ENCODE measurements at regions of chr7 and their contacts with region 1.

Region 1: GRCh38 chr7:100101016-100101862 is at the starts of genes AP4M1 and MCM7:
- DNase-seq: peak; percentile 84 to 98 (median 93)
- ATAC-seq: peak; percentile 90
- H3K4me3 ChIP-seq: peak within 1 kb of the TSS; percentile 98
- H3K4me3 Mint-ChIP-seq: peak within 1 kb of the TSS; percentile 85 to 95 (median 93)
- H3K27ac ChIP-seq: peak within 1 kb of the TSS; percentile 91
- H3K27ac Mint-ChIP-seq: peak within 1 kb of the TSS; percentile 90 to 98 (median 96)
- H3K4me1 ChIP-seq: peaks cover 17 to 25% of the 10 kb centered on the region in 2 donors
- H3K4me1 Mint-ChIP-seq: peaks cover 27 to 47% (median 41%) of the 10 kb centered on the region in 7 donors
- H3K27me3 ChIP-seq: no peaks in the 10 kb centered on the region
- H3K27me3 Mint-ChIP-seq: no peaks in the 10 kb centered on the region
- total RNA-seq, gene AP4M1: 7.5 to 13.8 (median 11.0) TPM
- total RNA-seq, gene MCM7: 80.3 to 263 (median 168) TPM

Region 2: GRCh38 chr7:99504603-99505323 is 596.5 kb before region 1 on chr7 and contains the start of gene ZKSCAN5:
- CTCF ChIA-PET with region 1: no interaction called
- POLR2A ChIA-PET with region 1: interaction called, 3 read pairs
- intact Hi-C with region 1: loop called in 1 of 2 experiments (anchors 5 kb)
- DNase-seq: peak; percentile 93 to 98 (median 97)
- ATAC-seq: peak; percentile 93
- H3K4me3 ChIP-seq: peak within 1 kb of the TSS; percentile 98
- H3K4me3 Mint-ChIP-seq: peak within 1 kb of the TSS; percentile 84 to 100 (median 96)
- H3K27ac ChIP-seq: peak within 1 kb of the TSS; percentile 88
- H3K27ac Mint-ChIP-seq: peak within 1 kb of the TSS; percentile 68 to 99 (median 97)
- H3K4me1 ChIP-seq: peaks cover 13 to 27% of the 10 kb centered on the region in 2 donors
- H3K4me1 Mint-ChIP-seq: peaks cover 20 to 41% (median 30%) of the 10 kb centered on the region in 7 donors
- H3K27me3 ChIP-seq: no peaks in the 10 kb centered on the region
- H3K27me3 Mint-ChIP-seq: no peaks in the 10 kb centered on the region
- total RNA-seq, gene ZKSCAN5: 4.7 to 11.0 (median 8.3) TPM

Region 3: GRCh38 chr7:100049441-100050311 is 51.6 kb before region 1 on chr7 and contains the start of gene ZSCAN21:
- CTCF ChIA-PET with region 1: interaction called, 4 read pairs
- POLR2A ChIA-PET with region 1: interaction called, 7 read pairs
- intact Hi-C with region 1: loop called (anchors 1 kb)
- DNase-seq: peak; percentile 70 to 89 (median 78)
- ATAC-seq: peak; percentile 94
- H3K4me3 ChIP-seq: peak within 1 kb of the TSS; percentile 92
- H3K4me3 Mint-ChIP-seq: peak within 1 kb of the TSS; percentile 86 to 95 (median 92)
- H3K27ac ChIP-seq: peak within 1 kb of the TSS; percentile 95
- H3K27ac Mint-ChIP-seq: peak within 1 kb of the TSS; percentile 81 to 98 (median 97)
- H3K4me1 ChIP-seq: peaks cover 0 to 6% of the 10 kb centered on the region in 2 donors
- H3K4me1 Mint-ChIP-seq: peaks cover 4 to 29% (median 25%) of the 10 kb centered on the region in 7 donors
- H3K27me3 ChIP-seq: no peaks in the 10 kb centered on the region
- H3K27me3 Mint-ChIP-seq: peaks cover 0 to 3% (median 0%) of the 10 kb centered on the region in 5 donors
- total RNA-seq, gene ZSCAN21: 3.9 to 10.1 (median 6.2) TPM

Region 4: DNA sequence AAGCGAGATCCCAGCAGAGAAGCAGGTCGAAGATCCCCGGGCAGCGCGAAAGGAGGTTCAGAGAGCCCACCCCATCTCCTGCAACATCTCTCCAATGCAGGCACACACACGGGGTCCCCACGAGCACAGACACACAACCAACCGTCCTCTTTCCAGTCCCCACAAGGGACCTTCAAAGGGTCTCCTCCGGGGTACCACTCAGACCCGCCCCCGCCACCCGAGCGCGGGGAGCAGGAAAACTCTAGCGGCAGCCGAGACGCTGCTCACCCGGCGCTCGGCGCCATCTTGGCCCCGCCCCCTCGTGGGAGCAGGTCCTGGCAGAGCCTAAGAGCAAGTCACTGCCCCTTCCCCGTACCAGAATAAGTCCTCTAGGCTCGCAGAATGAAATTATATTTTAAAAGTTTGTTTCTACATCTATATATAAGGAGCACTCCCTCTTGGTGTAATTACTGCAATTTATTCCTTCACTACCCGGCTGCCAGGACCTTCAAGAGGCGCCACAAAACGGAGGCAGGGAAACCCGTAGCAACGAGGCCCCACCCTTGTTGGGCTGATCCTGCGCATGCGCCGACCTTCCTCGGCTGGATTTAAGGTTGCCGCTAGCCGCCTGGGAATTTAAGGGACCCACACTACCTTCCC is 17.9 kb after region 1 on chr7 and contains the starts of genes CNPY4 and TAF6:
- CTCF ChIA-PET with region 1: no interaction called
- POLR2A ChIA-PET with region 1: interaction called, 107 read pairs
- intact Hi-C with region 1: loop called (anchors 1 kb)
- DNase-seq: peak; percentile 88 to 97 (median 95)
- ATAC-seq: peak; percentile 88
- H3K4me3 ChIP-seq: peak within 1 kb of the TSS; percentile 100
- H3K4me3 Mint-ChIP-seq: peak within 1 kb of the TSS; percentile 90 to 100 (median 98)
- H3K27ac ChIP-seq: peak within 1 kb of the TSS; percentile 88
- H3K27ac Mint-ChIP-seq: peak within 1 kb of the TSS; percentile 97 to 99 (median 98)
- H3K4me1 ChIP-seq: peaks cover 12 to 19% of the 10 kb centered on the region in 2 donors
- H3K4me1 Mint-ChIP-seq: peaks cover 18 to 34% (median 28%) of the 10 kb centered on the region in 7 donors
- H3K27me3 ChIP-seq: no peaks in the 10 kb centered on the region
- H3K27me3 Mint-ChIP-seq: no peaks in the 10 kb centered on the region
- total RNA-seq, gene CNPY4: 22.1 to 68.2 (median 40.3) TPM
- total RNA-seq, gene TAF6: 39.5 to 68.1 (median 55.0) TPM

Region 5: DNA sequence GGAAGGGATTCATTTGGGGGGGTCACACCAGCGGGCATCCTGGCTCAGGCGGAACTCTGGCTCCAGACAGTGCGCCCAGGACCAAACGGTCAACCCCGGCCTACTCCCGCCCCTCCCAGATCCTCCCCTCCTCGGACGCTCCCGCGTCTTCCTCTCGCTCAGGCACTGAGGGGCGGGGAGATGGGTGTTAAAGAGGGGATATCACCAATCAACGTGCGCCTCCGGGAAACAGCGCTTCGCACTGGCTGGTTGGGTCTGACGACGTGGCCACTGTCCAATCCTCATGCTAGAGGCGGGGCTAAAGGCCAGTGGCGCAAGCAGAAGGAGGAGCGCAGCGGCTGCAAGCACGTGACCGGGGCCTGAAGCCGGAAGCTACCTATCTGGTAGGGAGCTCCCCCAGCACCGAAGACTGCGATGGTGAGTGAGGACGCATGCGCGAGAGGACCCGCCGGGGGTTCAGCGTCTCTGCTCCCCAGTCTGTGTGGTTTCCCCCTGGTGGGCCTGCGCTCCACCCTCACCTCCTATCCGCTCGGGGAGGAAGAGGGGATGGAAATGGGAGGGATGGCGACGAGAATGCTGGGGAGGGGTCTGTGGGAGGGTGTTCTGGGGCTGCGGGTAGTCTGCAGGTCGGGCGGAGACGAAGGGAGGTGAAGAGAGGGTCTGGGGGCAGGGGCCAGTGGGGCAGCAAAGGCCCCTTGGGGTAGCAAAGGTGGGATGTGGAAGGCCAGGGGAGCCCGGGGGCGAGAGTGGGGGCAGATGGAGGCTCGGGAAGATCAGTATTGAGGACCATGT is 47.5 kb after region 1 on chr7 and contains the start of gene LAMTOR4:
- CTCF ChIA-PET with region 1: interaction called, 4 read pairs
- POLR2A ChIA-PET with region 1: interaction called, 4 read pairs
- intact Hi-C with region 1: loop called in 1 of 2 experiments (anchors 1 kb)
- DNase-seq: peak; percentile 84 to 99 (median 97)
- ATAC-seq: peak; percentile 98
- H3K4me3 ChIP-seq: peak within 1 kb of the TSS; percentile 97
- H3K4me3 Mint-ChIP-seq: peak within 1 kb of the TSS; percentile 87 to 100 (median 96)
- H3K27ac ChIP-seq: peak within 1 kb of the TSS; percentile 98
- H3K27ac Mint-ChIP-seq: peak within 1 kb of the TSS; percentile 95 to 99 (median 98)
- H3K4me1 ChIP-seq: peaks cover 15 to 19% of the 10 kb centered on the region in 2 donors
- H3K4me1 Mint-ChIP-seq: peaks cover 27 to 45% (median 38%) of the 10 kb centered on the region in 7 donors
- H3K27me3 ChIP-seq: no peaks in the 10 kb centered on the region
- H3K27me3 Mint-ChIP-seq: no peaks in the 10 kb centered on the region
- total RNA-seq, gene LAMTOR4: 132 to 200 (median 173) TPM

Region 6: DNA sequence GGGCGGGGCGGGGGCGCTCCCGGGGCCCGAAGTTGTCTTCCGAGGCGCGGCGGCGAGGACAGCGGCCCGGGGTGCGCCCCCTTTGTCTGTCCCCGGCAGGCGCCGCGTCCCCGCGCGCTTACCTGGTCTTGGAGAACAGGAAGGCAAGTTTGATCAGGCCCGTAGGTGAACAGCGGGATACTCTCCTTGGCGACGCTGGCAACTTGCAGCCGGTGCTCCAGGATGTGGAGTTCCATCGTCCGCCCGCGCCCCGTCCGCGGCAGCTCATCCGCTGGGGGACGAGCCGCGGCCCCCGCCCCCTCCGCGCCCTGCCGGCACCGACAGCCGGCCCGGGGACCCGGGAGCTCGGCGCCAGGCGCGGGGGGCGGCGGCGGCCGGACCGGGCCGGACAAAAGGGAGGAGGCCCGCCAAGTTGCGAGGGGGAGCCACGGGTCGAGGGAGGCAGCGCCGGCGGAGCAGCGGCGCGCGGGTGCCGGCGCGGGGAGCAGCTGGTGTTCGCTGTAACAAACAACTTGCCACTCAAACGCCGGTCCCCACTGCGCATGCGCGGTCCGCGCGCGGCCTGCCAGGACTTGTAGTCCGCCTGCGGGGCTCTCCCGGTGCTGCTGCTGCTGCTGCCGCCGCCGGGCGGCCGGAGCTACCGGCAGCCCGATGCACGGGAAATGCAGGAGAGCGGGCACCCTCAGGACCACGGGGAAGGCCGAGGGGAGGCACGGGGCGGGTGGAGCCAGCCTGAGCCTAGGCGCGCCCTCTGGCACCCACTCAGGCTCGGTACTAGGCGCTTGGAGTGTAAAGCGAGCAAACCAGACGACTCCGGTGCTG is 170.7 kb after region 1 on chr7:
- CTCF ChIA-PET with region 1: no interaction called
- POLR2A ChIA-PET with region 1: no interaction called
- intact Hi-C with region 1: loop called in 1 of 2 experiments (anchors 1 kb)
- DNase-seq: peak; percentile 97 to 99 (median 98)
- ATAC-seq: peak; percentile 96
- H3K4me3 ChIP-seq: peak overlapping the region; percentile 61
- H3K4me3 Mint-ChIP-seq: peak overlapping the region; percentile 78 to 89 (median 82)
- H3K27ac ChIP-seq: peak overlapping the region; percentile 61
- H3K27ac Mint-ChIP-seq: peak overlapping the region in 4 of 9 donors; percentile 21 to 84 (median 46)
- H3K4me1 ChIP-seq: peaks cover 0 to 4% of the 10 kb centered on the region in 2 donors
- H3K4me1 Mint-ChIP-seq: peaks cover 8 to 19% (median 17%) of the 10 kb centered on the region in 7 donors
- H3K27me3 ChIP-seq: no peaks in the 10 kb centered on the region
- H3K27me3 Mint-ChIP-seq: peaks cover 0 to 4% (median 0%) of the 10 kb centered on the region in 5 donors

Region 7: DNA sequence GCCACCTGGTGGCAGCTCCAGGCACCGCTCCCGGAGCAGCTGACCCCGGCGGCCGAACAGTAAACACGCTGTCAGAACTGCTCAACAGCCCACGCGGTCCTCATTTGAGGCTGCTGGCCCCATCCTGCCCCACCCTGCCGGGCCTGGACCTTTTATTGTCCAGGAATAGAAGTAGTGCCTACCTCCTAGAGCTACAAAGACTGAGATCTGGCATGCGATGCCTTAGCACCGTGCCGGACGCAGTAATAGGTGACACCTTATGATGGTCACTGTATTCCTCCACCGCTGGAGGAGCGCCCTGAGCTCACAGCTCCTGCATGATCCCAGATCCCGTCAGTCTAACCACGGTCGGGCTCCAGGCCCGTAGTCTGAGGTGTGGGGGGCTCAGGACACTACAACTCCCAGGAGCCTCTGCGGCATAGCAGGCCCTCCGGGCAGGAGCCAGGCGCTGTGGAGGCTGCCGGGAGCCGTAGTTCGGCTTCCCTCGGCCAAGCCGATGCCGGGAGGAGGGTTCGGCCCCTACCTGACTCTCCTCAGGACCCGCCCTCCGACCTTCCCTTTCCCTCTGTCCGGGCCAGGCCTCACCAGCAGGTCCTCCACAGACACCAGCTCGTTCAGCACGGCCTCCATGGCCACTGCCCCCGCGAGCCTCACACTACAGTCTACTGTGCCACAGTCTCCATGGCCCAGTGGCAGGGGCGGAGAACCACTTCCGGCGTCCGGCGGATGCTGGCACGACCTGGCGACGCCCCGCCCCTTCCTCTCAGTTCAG is 1143.3 kb after region 1 on chr7 and contains the start of gene FIS1:
- CTCF ChIA-PET with region 1: no interaction called
- POLR2A ChIA-PET with region 1: interaction called, 4 read pairs
- intact Hi-C with region 1: loop called in 1 of 2 experiments (anchors 5 kb)
- DNase-seq: peak; percentile 87 to 96 (median 94)
- ATAC-seq: peak; percentile 96
- H3K4me3 ChIP-seq: peak within 1 kb of the TSS; percentile 100
- H3K4me3 Mint-ChIP-seq: peak within 1 kb of the TSS; percentile 88 to 100 (median 98)
- H3K27ac ChIP-seq: peak within 1 kb of the TSS; percentile 93
- H3K27ac Mint-ChIP-seq: peak within 1 kb of the TSS; percentile 93 to 100 (median 97)
- H3K4me1 ChIP-seq: peaks cover 14 to 16% of the 10 kb centered on the region in 2 donors
- H3K4me1 Mint-ChIP-seq: peaks cover 16 to 45% (median 35%) of the 10 kb centered on the region in 7 donors
- H3K27me3 ChIP-seq: no peaks in the 10 kb centered on the region
- H3K27me3 Mint-ChIP-seq: no peaks in the 10 kb centered on the region
- total RNA-seq, gene FIS1: 79.8 to 121 (median 107) TPM